ENCODE measurements at regions of chr6 and their contacts with region 1.

Region 1: DNA sequence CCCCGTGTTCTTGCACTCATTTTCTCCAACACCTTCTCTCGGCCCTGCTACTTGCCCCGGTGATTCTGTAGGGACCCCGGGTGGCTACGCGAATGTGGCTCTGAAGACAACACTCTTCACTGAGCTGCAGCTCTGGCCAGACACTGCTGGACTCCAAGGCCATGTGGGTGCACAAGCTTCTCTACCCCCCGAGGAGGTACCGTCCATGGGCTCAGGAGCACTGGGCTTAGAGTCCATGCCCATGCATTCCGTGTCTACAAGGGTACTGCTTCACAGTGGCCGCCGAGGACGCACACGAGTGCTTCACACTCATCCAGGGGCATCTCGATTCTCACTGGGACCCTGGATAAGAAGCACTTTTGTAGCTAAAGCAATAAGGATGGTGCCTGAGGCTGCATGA is 59.5 kb downstream of the SMOC2 start:
- DNase-seq: no peak
- H3K4me3 ChIP-seq: no peak overlapping the region
- H3K27ac ChIP-seq: no peak overlapping the region
- H3K4me1 ChIP-seq: peaks cover 4% of the 10 kb centered on the region
- H3K27me3 ChIP-seq: no peaks in the 10 kb centered on the region
- CTCF ChIP-seq: no peak
- POLR2A ChIP-seq: no peak

Region 2: DNA sequence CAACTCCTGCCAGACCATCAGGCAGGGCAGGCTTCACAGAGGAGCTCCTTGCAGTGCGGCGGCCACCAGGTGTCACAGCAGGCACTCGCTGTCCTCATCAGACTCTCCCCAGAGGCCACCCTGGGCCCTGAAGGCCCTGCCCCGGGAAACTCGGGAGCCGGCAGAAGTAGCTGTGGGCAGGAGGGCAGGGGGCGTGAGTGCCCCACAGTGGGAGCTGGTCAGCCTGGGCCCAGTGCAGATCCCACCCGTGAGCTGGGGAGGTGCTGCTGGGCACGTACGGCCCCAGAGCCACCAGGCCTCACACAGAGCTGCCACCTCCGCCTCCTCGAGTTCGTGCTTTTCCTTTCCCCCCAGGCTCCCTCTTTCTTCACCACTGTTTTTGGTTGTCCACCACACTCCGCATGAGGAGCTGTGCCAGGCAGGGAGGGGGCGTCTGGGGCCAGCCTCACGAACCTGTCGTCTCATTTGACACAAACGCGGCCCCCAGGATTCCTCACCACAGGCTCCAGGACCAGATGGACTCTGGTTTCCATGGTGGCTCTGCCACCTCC is 455.3 kb before region 1 on chr6:
- intact Hi-C with region 1: loop called (anchors 5 kb)
- DNase-seq: no peak
- H3K4me3 ChIP-seq: no peak overlapping the region
- H3K27ac ChIP-seq: no peak overlapping the region
- H3K4me1 ChIP-seq: peaks cover 16% of the 10 kb centered on the region
- H3K27me3 ChIP-seq: no peaks in the 10 kb centered on the region
- CTCF ChIP-seq: no peak
- POLR2A ChIP-seq: no peak

Region 3: DNA sequence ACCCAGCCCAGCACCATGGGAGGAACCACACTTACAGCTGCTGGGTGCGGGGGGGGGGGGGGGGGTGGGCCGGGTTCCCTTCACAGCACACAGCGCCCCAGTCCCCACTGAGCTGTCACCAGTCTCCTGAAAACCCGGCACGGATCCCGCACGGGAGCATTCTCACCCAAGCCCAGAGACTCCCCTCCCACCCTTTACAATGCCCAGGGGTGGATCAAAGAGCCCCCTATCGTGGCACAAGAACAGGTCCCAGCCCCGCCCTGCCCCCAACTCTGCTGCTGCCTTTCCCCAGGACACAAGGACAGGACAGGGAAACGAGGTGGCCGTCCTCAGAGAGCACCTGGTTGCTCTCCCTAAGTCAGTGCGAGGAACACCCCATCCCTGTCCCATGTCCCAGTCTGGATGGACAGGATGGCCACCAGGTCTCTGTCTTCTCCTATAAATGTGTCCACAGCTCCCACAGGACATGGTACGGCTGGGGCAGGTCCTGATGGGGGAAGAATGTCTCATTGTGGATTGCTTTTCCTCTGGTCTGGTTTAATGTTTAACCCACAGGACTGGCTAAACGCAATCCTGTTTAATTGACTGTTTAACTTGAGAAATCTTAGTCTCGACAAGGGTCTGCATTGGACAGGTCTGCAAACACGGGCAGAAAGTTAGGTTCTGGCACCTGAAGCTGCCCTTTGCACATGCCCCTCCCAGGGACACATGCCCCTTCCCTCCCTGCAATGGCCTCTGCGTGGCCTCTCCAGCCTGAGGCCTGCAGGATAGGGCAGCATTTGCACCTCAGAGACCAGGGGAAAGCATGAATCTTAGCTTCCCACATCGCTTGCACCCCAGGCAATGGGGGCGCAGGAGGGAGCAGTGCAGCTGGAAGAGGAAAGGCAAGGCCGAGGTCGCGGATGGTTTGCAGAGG is 226.2 kb before region 1 on chr6:
- intact Hi-C with region 1: no loop called
- DNase-seq: no peak
- H3K4me3 ChIP-seq: no peak overlapping the region
- H3K27ac ChIP-seq: no peak overlapping the region
- H3K4me1 ChIP-seq: no peaks in the 10 kb centered on the region
- H3K27me3 ChIP-seq: no peaks in the 10 kb centered on the region
- CTCF ChIP-seq: no peak
- POLR2A ChIP-seq: no peak

Measured in testis (tissue), 5 donors.